ENCODE measurements at regions of chr9 and their contacts with region 1.

Region 1: DNA sequence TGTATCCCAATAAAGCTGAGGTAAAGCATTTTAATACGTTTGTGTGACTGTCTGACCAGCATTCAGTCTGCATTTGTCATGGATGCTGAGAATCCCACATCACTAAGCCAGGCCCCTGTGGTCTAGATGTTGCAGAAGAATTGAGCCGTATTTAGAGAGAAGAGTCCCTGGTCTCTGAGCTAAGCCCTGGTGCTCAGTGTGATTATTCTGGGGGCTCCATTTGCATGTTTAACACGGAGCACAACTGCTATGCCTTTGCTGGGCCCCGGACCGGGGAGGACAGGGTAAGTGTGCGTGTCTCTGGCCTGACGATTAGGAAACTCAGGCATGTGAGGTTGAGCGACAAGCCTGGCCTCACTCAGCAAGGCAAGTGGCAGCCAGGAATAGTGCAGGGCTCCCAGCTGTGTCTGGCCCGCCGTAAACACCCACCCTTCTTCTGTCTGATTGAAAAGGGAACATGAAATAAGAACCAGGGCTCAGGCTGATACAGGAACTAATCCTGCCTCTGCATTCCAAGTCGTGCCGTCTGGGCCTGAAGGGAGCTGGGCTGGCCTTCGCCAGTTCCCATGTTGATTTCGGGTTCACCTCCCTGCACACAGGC is 22.3 kb downstream of the FAM78A start:
- DNase-seq: peak in 1 of 9 donors; percentile 7
- ATAC-seq: no peak
- H3K4me3 ChIP-seq: no peak overlapping the region
- H3K4me3 Mint-ChIP-seq: peak overlapping the region; percentile 23 to 87 (median 52)
- H3K27ac ChIP-seq: peak overlapping the region; percentile 16
- H3K27ac Mint-ChIP-seq: peak overlapping the region; percentile 80 to 99 (median 96)
- H3K4me1 ChIP-seq: peaks cover 63 to 73% of the 10 kb centered on the region in 2 donors
- H3K4me1 Mint-ChIP-seq: peaks cover 13 to 74% (median 57%) of the 10 kb centered on the region in 7 donors
- H3K27me3 ChIP-seq: no peaks in the 10 kb centered on the region
- H3K27me3 Mint-ChIP-seq: no peaks in the 10 kb centered on the region

Region 2: GRCh38 chr9:131178382-131178781 is 75.6 kb before region 1 on chr9:
- CTCF ChIA-PET with region 1: interaction called, 6 read pairs
- POLR2A ChIA-PET with region 1: interaction called, 8 read pairs
- intact Hi-C with region 1: loop called (anchors 1 to 5 kb)
- DNase-seq: peak; percentile 49 to 83 (median 74)
- ATAC-seq: peak; percentile 100
- H3K4me3 ChIP-seq: no peak overlapping the region
- H3K4me3 Mint-ChIP-seq: no peak overlapping the region
- H3K27ac ChIP-seq: no peak overlapping the region
- H3K27ac Mint-ChIP-seq: peak overlapping the region in 6 of 9 donors; percentile 25 to 73 (median 40)
- H3K4me1 ChIP-seq: peaks cover 0 to 5% of the 10 kb centered on the region in 2 donors
- H3K4me1 Mint-ChIP-seq: peaks cover 5 to 24% (median 10%) of the 10 kb centered on the region in 7 donors
- H3K27me3 ChIP-seq: no peaks in the 10 kb centered on the region
- H3K27me3 Mint-ChIP-seq: no peaks in the 10 kb centered on the region

Region 3: DNA sequence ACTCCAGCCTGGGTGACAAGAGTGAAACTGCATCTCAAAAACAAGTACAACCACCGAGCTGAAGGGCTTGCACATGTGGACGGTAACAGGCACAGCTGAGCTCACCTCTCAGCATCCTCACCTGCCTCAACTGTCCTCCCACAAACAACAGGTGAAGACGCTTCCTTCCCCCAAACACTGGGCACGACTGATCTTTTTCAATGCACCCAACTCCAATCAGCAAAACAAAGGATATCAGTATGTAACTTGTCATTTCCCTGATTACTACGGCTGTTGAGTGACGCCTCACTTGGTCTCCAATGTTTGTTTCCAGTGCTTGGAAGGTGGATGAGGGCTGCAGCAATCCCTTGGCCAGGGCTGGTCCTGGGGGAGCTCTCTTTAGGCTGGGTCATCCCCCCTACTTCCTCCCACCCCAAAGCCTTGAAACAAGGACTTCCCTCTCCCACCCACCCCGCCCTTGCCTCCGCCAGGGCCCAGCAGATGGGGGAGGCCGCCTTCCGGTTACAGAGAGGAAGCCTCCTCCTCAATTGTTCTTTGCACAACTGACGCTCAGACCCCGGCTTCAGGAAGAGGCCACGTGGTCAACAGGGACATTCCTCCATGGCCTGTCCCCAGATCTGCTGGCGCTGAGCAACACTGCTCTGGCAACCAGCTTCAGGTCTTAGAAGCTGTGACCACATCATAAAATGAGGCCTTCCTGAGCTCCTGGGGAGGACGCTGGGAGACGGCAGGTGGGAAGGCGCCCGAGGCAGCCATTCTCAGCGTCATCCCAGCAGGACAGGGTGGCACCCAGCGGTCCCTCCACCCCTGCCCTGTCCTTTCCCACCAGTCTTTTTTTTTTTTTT is 16.4 kb after region 1 on chr9:
- CTCF ChIA-PET with region 1: interaction called, 44 read pairs
- POLR2A ChIA-PET with region 1: interaction called, 886 read pairs
- intact Hi-C with region 1: loop called (anchors 1 kb)
- DNase-seq: peak in 8 of 9 donors; percentile 49 to 70 (median 64)
- ATAC-seq: peak; percentile 16
- H3K4me3 ChIP-seq: peak overlapping the region; percentile 74
- H3K4me3 Mint-ChIP-seq: peak overlapping the region; percentile 83 to 100 (median 92)
- H3K27ac ChIP-seq: peak overlapping the region; percentile 96
- H3K27ac Mint-ChIP-seq: peak overlapping the region; percentile 95 to 100 (median 99)
- H3K4me1 ChIP-seq: peaks cover 50 to 63% of the 10 kb centered on the region in 2 donors
- H3K4me1 Mint-ChIP-seq: peaks cover 30 to 61% (median 50%) of the 10 kb centered on the region in 7 donors
- H3K27me3 ChIP-seq: no peaks in the 10 kb centered on the region
- H3K27me3 Mint-ChIP-seq: no peaks in the 10 kb centered on the region

Region 4: DNA sequence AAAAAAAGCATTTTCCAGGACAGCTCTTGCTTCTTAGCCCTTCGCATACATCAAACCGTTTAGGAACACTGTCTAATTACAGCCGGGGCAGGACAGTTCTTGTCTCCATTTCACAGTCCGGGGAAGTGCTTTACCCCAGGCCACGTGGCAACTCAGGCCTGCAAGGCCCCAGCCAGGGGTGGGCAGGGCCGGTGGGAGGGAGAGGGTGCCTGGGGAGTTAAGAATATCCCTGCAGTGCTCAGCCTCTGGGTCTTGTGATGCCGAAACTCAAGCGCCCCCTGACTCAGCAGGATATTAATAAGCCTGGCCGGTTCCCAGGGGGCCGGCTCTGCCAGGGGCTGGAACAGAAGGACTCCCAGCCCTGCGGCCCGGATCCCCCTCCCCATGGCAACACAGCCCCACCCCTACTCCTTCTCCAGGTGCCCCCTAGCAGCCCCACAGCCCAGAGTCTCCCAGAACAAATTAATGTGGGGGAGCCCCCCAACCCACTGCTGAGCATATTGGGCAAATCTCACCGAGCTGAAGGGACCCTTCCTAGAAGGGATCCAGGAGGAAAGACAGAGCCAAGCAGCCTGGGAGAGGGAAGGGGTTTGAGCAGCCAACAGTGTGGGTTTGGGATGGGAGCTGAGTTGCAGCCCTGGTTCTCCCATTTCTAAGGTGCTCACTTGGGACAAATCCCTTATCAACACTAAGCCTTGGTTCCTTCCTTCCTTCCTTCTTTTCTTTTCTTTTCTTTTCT is 80.8 kb after region 1 on chr9:
- CTCF ChIA-PET with region 1: interaction called, 6 read pairs
- POLR2A ChIA-PET with region 1: interaction called, 4 read pairs
- intact Hi-C with region 1: loop called in 1 of 2 experiments (anchors 1 kb)
- DNase-seq: no peak
- ATAC-seq: no peak
- H3K4me3 ChIP-seq: no peak overlapping the region
- H3K4me3 Mint-ChIP-seq: no peak overlapping the region
- H3K27ac ChIP-seq: no peak overlapping the region
- H3K27ac Mint-ChIP-seq: no peak overlapping the region
- H3K4me1 ChIP-seq: peaks cover 0 to 3% of the 10 kb centered on the region in 2 donors
- H3K4me1 Mint-ChIP-seq: peaks cover 4 to 7% (median 4%) of the 10 kb centered on the region in 7 donors
- H3K27me3 ChIP-seq: no peaks in the 10 kb centered on the region
- H3K27me3 Mint-ChIP-seq: peaks cover 0 to 5% (median 0%) of the 10 kb centered on the region in 5 donors

Region 5: GRCh38 chr9:131733541-131734061 is 479.6 kb after region 1 on chr9:
- CTCF ChIA-PET with region 1: no interaction called
- POLR2A ChIA-PET with region 1: no interaction called
- intact Hi-C with region 1: loop called (anchors 2 to 10 kb)
- DNase-seq: peak in 2 of 9 donors; percentile 14 to 57
- ATAC-seq: peak; percentile 5
- H3K4me3 ChIP-seq: peak overlapping the region; percentile 46
- H3K4me3 Mint-ChIP-seq: peak overlapping the region; percentile 76 to 89 (median 82)
- H3K27ac ChIP-seq: peak overlapping the region; percentile 73
- H3K27ac Mint-ChIP-seq: peak overlapping the region; percentile 84 to 99 (median 90)
- H3K4me1 ChIP-seq: peaks cover 84 to 85% of the 10 kb centered on the region in 2 donors
- H3K4me1 Mint-ChIP-seq: peaks cover 70 to 93% (median 89%) of the 10 kb centered on the region in 7 donors
- H3K27me3 ChIP-seq: no peaks in the 10 kb centered on the region
- H3K27me3 Mint-ChIP-seq: no peaks in the 10 kb centered on the region